CD8-positive, alpha-beta T cell (primary cell): ENCODE measurements at regions of chr17 and their contacts with region 1.

Region 1: GRCh38 chr17:13437966-13438779 is 163.6 kb downstream of the HS3ST3A1 start:
- DNase-seq: no peak
- ATAC-seq: no peak
- H3K4me3 ChIP-seq: no peak overlapping the region
- H3K4me3 Mint-ChIP-seq: no peak overlapping the region
- H3K27ac ChIP-seq: no peak overlapping the region
- H3K27ac Mint-ChIP-seq: no peak overlapping the region
- H3K4me1 ChIP-seq: no peaks in the 10 kb centered on the region
- H3K4me1 Mint-ChIP-seq: no peaks in the 10 kb centered on the region
- H3K27me3 ChIP-seq: no peaks in the 10 kb centered on the region
- H3K27me3 Mint-ChIP-seq: peaks cover 4% of the 10 kb centered on the region
- CTCF ChIP-seq: no peak

Region 2: GRCh38 chr17:13374203-13375143 is 63.7 kb before region 1 on chr17:
- CTCF ChIA-PET with region 1: no interaction called
- POLR2A ChIA-PET with region 1: no interaction called
- intact Hi-C with region 1: loop called in 1 of 2 experiments (anchors 10 kb)
- DNase-seq: no peak
- ATAC-seq: no peak
- H3K4me3 ChIP-seq: no peak overlapping the region
- H3K4me3 Mint-ChIP-seq: no peak overlapping the region
- H3K27ac ChIP-seq: no peak overlapping the region
- H3K27ac Mint-ChIP-seq: no peak overlapping the region
- H3K4me1 ChIP-seq: no peaks in the 10 kb centered on the region
- H3K4me1 Mint-ChIP-seq: no peaks in the 10 kb centered on the region
- H3K27me3 ChIP-seq: no peaks in the 10 kb centered on the region
- H3K27me3 Mint-ChIP-seq: peaks cover 2% of the 10 kb centered on the region
- CTCF ChIP-seq: no peak

Region 3: DNA sequence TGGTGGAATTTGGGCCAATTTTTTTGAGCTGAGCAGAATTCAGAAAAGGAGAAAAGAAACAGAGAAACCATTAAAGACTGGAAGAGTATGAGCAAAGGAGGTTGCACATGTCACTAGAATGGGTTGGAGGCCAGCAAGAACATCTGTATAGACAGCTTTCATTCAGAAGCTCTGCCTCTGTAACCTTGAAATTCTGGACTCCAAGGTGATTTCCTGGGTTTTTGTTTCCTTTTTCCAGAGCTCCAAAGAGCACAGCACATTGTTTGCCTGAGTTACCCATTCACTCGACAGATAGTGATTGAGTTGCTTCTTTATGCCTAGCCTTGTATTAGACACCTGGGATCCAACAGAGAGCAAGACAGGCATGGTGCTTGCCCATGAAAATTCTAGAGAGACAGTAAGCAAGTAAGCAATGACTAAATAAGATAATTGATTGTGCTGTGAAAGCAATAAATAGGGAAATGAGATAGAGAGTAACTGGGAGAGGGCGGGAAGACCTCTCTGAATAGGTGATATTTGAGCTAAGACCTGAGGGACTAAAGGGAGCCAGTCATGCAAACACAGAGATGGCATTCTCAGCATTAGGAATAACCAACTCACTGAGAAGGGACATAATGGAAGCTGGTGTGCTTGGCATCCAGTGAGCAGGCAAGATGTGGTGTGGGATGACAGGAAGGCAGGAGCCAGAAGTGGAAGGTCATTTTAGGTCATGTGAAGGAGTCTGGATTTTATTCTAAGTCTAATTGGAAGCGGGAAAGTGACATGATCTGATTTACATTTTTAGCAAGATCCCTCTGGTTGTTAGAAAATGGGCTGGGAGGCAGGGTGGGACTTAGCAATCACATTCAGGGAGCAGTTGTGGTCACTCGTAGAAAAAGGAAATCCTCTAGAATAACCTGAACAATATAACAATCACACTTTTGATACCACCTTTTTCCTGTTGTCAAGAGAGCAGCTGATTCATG is 33.9 kb before region 1 on chr17:
- CTCF ChIA-PET with region 1: no interaction called
- POLR2A ChIA-PET with region 1: no interaction called
- intact Hi-C with region 1: loop called in 1 of 2 experiments (anchors 5 kb)
- DNase-seq: no peak
- ATAC-seq: no peak
- H3K4me3 ChIP-seq: no peak overlapping the region
- H3K4me3 Mint-ChIP-seq: no peak overlapping the region
- H3K27ac ChIP-seq: no peak overlapping the region
- H3K27ac Mint-ChIP-seq: no peak overlapping the region
- H3K4me1 ChIP-seq: no peaks in the 10 kb centered on the region
- H3K4me1 Mint-ChIP-seq: no peaks in the 10 kb centered on the region
- H3K27me3 ChIP-seq: no peaks in the 10 kb centered on the region
- H3K27me3 Mint-ChIP-seq: peaks cover 11% of the 10 kb centered on the region
- CTCF ChIP-seq: no peak

Region 4: DNA sequence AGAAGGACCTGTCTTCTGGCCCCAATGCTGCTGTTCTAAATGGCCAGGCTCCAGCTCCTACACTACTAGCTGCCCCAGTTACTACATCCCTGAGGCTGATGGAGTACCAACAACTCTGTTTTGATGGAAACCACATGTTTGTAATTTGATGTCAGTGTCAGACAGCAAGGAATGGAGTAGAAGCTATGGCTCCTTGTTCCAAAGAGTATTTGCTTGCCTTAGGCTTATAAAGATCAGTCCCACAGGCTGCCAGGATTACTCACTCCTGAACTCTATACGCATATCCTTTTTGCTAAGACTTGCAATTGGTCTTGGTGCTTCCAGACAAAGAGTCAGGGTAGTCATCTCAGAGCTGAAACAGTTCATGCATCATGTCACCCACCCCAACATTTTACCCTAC is 24.0 kb after region 1 on chr17:
- CTCF ChIA-PET with region 1: no interaction called
- POLR2A ChIA-PET with region 1: no interaction called
- intact Hi-C with region 1: no loop called
- DNase-seq: no peak
- ATAC-seq: no peak
- H3K4me3 ChIP-seq: no peak overlapping the region
- H3K4me3 Mint-ChIP-seq: no peak overlapping the region
- H3K27ac ChIP-seq: no peak overlapping the region
- H3K27ac Mint-ChIP-seq: no peak overlapping the region
- H3K4me1 ChIP-seq: no peaks in the 10 kb centered on the region
- H3K4me1 Mint-ChIP-seq: no peaks in the 10 kb centered on the region
- H3K27me3 ChIP-seq: no peaks in the 10 kb centered on the region
- H3K27me3 Mint-ChIP-seq: peaks cover 6% of the 10 kb centered on the region
- CTCF ChIP-seq: no peak

Region 5: GRCh38 chr17:13537871-13538643 is 99.9 kb after region 1 on chr17:
- CTCF ChIA-PET with region 1: no interaction called
- POLR2A ChIA-PET with region 1: no interaction called
- intact Hi-C with region 1: no loop called
- DNase-seq: no peak
- ATAC-seq: no peak
- H3K4me3 ChIP-seq: no peak overlapping the region
- H3K4me3 Mint-ChIP-seq: no peak overlapping the region
- H3K27ac ChIP-seq: no peak overlapping the region
- H3K27ac Mint-ChIP-seq: no peak overlapping the region
- H3K4me1 ChIP-seq: no peaks in the 10 kb centered on the region
- H3K4me1 Mint-ChIP-seq: no peaks in the 10 kb centered on the region
- H3K27me3 ChIP-seq: no peaks in the 10 kb centered on the region
- H3K27me3 Mint-ChIP-seq: peaks cover 9% of the 10 kb centered on the region
- CTCF ChIP-seq: no peak

Region 6: GRCh38 chr17:13626703-13627102 is 188.5 kb after region 1 on chr17:
- CTCF ChIA-PET with region 1: no interaction called
- POLR2A ChIA-PET with region 1: no interaction called
- intact Hi-C with region 1: no loop called
- DNase-seq: no peak
- ATAC-seq: no peak
- H3K4me3 ChIP-seq: no peak overlapping the region
- H3K4me3 Mint-ChIP-seq: no peak overlapping the region
- H3K27ac ChIP-seq: no peak overlapping the region
- H3K27ac Mint-ChIP-seq: no peak overlapping the region
- H3K4me1 ChIP-seq: no peaks in the 10 kb centered on the region
- H3K4me1 Mint-ChIP-seq: no peaks in the 10 kb centered on the region
- H3K27me3 ChIP-seq: no peaks in the 10 kb centered on the region
- H3K27me3 Mint-ChIP-seq: peaks cover 31% of the 10 kb centered on the region
- CTCF ChIP-seq: no peak